Pancreas (tissue), 10 donors: ENCODE measurements at regions of chr1 and their contacts with region 1.

Region 1: DNA sequence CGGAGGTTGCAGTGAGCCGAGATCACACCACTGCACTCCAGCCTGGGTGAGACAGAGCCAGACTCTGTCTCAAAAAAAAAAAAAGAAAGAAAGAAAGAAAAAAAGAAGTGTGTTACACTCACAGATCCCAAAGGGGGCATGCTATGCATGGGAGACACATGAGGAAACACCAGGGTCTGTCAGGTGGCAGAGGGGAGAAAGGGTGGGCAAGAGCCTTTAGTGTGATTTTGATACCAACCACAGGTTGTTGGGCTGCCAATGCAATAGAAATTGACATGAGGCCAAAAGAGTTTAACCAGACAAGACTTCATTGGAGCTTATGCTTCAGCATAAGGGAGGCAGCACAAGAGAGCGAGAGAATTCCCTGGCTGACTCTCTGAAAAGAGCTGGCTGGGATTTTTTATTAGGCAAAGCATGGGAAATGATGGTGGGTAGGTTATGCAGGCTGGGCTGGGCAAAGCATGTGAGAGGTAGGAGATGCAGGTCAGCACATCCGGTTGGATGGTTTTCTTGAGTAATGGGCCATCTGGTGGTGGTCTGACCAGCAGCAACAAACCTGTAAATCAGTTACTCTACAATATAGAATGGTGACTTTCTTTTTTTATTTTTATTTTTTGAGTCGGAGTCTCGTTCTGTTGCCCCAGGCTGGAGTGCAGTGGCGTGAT is 11.6 kb upstream of the EXTL1 start:
- DNase-seq: no peak
- ATAC-seq: no peak
- H3K4me3 ChIP-seq: no peak overlapping the region
- H3K27ac ChIP-seq: no peak overlapping the region
- H3K4me1 ChIP-seq: no peaks in the 10 kb centered on the region
- H3K27me3 ChIP-seq: no peaks in the 10 kb centered on the region
- CTCF ChIP-seq: no peak

Region 2: GRCh38 chr1:25658791-25659431 is 351.0 kb before region 1 on chr1:
- intact Hi-C with region 1: no loop called
- DNase-seq: peak in 5 of 6 donors; percentile 69 to 86 (median 76)
- ATAC-seq: peak; percentile 89 to 96 (median 92)
- H3K4me3 ChIP-seq: no peak overlapping the region
- H3K27ac ChIP-seq: peak overlapping the region in 1 of 4 donors; percentile 12
- H3K4me1 ChIP-seq: peaks cover 0 to 7% (median 0%) of the 10 kb centered on the region in 3 donors
- H3K27me3 ChIP-seq: no peaks in the 10 kb centered on the region
- CTCF ChIP-seq: no peak

Region 3: GRCh38 chr1:25837262-25837875 is 172.6 kb before region 1 on chr1:
- intact Hi-C with region 1: loop called in 2 of 3 experiments (anchors 10 kb)
- DNase-seq: no peak
- ATAC-seq: peak; percentile 85 to 96 (median 94)
- H3K4me3 ChIP-seq: no peak overlapping the region
- H3K27ac ChIP-seq: peak overlapping the region in 2 of 4 donors; percentile 4 to 23
- H3K4me1 ChIP-seq: peaks cover 0 to 12% (median 0%) of the 10 kb centered on the region in 3 donors
- H3K27me3 ChIP-seq: no peaks in the 10 kb centered on the region
- CTCF ChIP-seq: peak in 3 of 4 donors; percentile 30 to 43 (median 39)

Region 4: GRCh38 chr1:25889470-25889869 is 120.5 kb before region 1 on chr1:
- intact Hi-C with region 1: loop called in 1 of 3 experiments (anchors 10 kb)
- DNase-seq: no peak
- ATAC-seq: peak; percentile 11 to 35 (median 18)
- H3K4me3 ChIP-seq: no peak overlapping the region
- H3K27ac ChIP-seq: peak overlapping the region in 3 of 4 donors; percentile 60 to 83 (median 79)
- H3K4me1 ChIP-seq: peaks cover 15 to 30% (median 18%) of the 10 kb centered on the region in 3 donors
- H3K27me3 ChIP-seq: no peaks in the 10 kb centered on the region
- CTCF ChIP-seq: no peak

Region 5: GRCh38 chr1:25922056-25922969 is 87.6 kb before region 1 on chr1:
- intact Hi-C with region 1: no loop called
- DNase-seq: peak in 4 of 6 donors; percentile 29 to 74 (median 39)
- ATAC-seq: peak; percentile 46 to 74 (median 70)
- H3K4me3 ChIP-seq: peak overlapping the region; percentile 29 to 48 (median 42)
- H3K27ac ChIP-seq: peak overlapping the region; percentile 31 to 76 (median 56)
- H3K4me1 ChIP-seq: peaks cover 0 to 7% (median 0%) of the 10 kb centered on the region in 3 donors
- H3K27me3 ChIP-seq: no peaks in the 10 kb centered on the region
- CTCF ChIP-seq: no peak

Region 6: DNA sequence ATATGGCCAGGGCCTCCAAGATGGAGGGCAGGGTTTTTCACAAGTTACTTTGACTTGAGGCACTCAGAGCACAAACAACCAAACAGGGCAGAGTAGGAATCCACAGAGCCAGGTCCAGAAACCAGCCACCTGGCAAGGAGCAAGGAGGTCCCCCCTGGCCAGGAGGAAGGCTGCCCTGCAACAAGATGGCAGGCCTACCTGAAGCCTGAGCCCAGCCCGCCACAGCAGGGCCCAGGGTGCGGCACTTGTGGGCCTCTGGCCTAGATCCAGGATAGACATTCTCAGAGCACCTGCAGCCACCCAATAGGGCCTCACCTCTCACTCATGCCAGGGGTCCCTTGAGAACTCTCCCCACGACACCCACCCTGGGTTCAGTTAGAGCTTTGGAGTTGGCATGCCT is 281.5 kb after region 1 on chr1:
- intact Hi-C with region 1: no loop called
- DNase-seq: no peak
- ATAC-seq: no peak
- H3K4me3 ChIP-seq: no peak overlapping the region
- H3K27ac ChIP-seq: no peak overlapping the region
- H3K4me1 ChIP-seq: no peaks in the 10 kb centered on the region
- H3K27me3 ChIP-seq: no peaks in the 10 kb centered on the region
- CTCF ChIP-seq: no peak